ENCODE measurements at regions of chr19 and their contacts with region 1.

Region 1: DNA sequence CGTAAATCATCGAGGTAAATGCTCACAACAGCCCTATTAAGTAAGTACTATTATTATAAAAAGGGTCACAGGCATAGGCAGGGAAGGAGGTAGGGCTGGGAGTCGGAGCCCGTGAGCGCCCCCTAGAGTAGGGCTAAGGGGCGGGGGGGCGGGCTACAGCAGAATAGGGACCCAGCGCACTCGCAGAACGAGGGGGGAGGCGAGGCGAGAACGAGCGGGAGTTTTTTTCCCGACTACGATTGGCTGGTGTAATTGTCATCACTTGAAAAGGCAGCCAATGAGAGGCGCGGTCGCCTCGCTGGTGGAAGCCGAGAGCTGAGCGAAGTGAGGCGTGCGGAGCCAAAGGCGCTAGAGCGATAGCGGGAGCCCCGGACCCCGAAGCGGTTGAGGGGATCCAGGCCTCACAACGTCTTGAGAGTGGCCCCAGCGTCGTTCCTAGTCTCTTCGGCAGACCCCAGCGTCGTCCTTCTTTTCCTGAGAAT is 24.2 kb downstream of the KEAP1 start:
- DNase-seq: peak; percentile 86 to 89
- H3K4me3 ChIP-seq: peak overlapping the region; percentile 57
- H3K27ac ChIP-seq: no peak overlapping the region
- H3K4me1 ChIP-seq: peaks cover 14% of the 10 kb centered on the region
- H3K27me3 ChIP-seq: no peaks in the 10 kb centered on the region
- CTCF ChIP-seq: peak; percentile 67

Region 2: GRCh38 chr19:10259162-10259905 is 219.6 kb before region 1 on chr19:
- CTCF ChIA-PET with region 1: interaction called, 3 read pairs
- POLR2A ChIA-PET with region 1: interaction called, 3 read pairs
- intact Hi-C with region 1: loop called (anchors 5 kb)
- DNase-seq: peak; percentile 83 to 86
- H3K4me3 ChIP-seq: no peak overlapping the region
- H3K27ac ChIP-seq: 0 out of 2 replicates have a peak overlapping the region, but pooled peaks have one; percentile 5
- H3K4me1 ChIP-seq: peaks cover 18% of the 10 kb centered on the region
- H3K27me3 ChIP-seq: no peaks in the 10 kb centered on the region
- CTCF ChIP-seq: peak; percentile 89

Region 3: GRCh38 chr19:10403137-10404021 is 75.6 kb before region 1 on chr19 and contains the start of gene CDC37:
- CTCF ChIA-PET with region 1: interaction called, 7 read pairs
- POLR2A ChIA-PET with region 1: no interaction called
- intact Hi-C with region 1: loop called (anchors 10 kb)
- DNase-seq: peak; percentile 90 to 96
- H3K4me3 ChIP-seq: peak within 1 kb of the TSS; percentile 89
- H3K27ac ChIP-seq: peak within 1 kb of the TSS; percentile 39
- H3K4me1 ChIP-seq: peaks cover 20% of the 10 kb centered on the region
- H3K27me3 ChIP-seq: peaks cover 21% of the 10 kb centered on the region; the same call in 1 of the 2 replicates
- CTCF ChIP-seq: no peak
- total RNA-seq, gene CDC37: 156 and 191 TPM in 2 replicates

Region 4: GRCh38 chr19:10602330-10603083 is 123.6 kb after region 1 on chr19:
- CTCF ChIA-PET with region 1: interaction called, 17 read pairs
- POLR2A ChIA-PET with region 1: no interaction called
- intact Hi-C with region 1: no loop called
- DNase-seq: peak; percentile 58 to 77
- H3K4me3 ChIP-seq: peak overlapping the region; percentile 93
- H3K27ac ChIP-seq: peak overlapping the region; percentile 90
- H3K4me1 ChIP-seq: peaks cover 31% of the 10 kb centered on the region
- H3K27me3 ChIP-seq: no peaks in the 10 kb centered on the region
- CTCF ChIP-seq: no peak

Region 5: DNA sequence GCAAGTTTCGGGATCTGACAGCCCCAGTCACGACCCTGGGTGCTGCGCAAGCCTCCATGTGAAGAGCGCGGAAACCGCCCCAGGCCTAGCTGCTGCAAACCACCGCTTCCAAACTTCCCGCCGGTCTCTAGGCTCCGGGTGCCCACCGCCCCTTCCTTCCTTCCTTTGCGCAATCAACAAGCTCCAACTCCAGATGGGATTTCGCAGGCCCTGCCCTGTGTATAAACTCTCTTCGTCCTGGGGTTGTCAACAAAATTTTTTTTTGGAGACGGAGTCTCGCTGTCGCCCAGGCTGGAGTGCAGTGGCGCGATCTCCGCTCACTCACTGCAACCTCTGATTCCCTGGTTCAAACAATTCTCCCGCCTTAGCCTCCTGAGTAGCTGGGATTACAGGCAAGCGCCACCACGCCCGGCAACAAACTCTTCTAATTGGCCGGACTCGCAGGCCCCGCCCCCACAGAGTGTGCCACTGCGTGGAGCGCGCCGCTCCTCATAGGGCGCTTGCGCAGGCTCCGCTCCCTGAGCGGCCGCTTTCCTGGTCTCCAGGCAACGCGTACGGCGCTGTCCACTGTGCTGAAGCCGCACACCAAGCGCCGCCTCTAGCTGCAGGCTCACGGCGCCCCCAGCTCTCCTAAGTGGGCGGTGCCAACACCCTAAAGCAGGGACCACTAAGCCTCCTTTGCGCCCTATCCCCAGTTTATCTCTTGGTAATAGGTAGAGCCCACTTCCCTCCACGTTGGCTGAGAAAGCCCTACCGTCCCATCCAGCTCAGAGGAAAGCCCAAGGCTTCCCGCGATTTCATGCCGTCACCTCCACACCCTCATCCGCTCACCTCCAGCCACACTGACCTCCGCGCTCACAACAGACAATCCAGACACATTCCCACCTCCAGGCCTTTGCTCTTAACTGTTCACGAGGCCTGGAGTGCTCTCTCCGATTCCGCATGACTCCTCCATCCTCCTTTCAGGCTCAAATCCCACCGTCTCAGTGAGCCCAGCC is 216.8 kb after region 1 on chr19:
- CTCF ChIA-PET with region 1: no interaction called
- POLR2A ChIA-PET with region 1: no interaction called
- intact Hi-C with region 1: loop called (anchors 5 kb)
- DNase-seq: peak; percentile 81 to 91
- H3K4me3 ChIP-seq: no peak overlapping the region
- H3K27ac ChIP-seq: no peak overlapping the region
- H3K4me1 ChIP-seq: peaks cover 8% of the 10 kb centered on the region; the same call in 1 of the 2 replicates
- H3K27me3 ChIP-seq: 0 out of 2 replicates have a peak, but pooled peaks cover 14% of the 10 kb centered on the region
- CTCF ChIP-seq: no peak

Region 6: GRCh38 chr19:11361037-11361770 is 882.3 kb after region 1 on chr19:
- CTCF ChIA-PET with region 1: interaction called, 14 read pairs
- POLR2A ChIA-PET with region 1: no interaction called
- intact Hi-C with region 1: no loop called
- DNase-seq: no peak
- H3K4me3 ChIP-seq: no peak overlapping the region
- H3K27ac ChIP-seq: no peak overlapping the region
- H3K4me1 ChIP-seq: peaks cover 15% of the 10 kb centered on the region
- H3K27me3 ChIP-seq: no peaks in the 10 kb centered on the region
- CTCF ChIP-seq: no peak

Measured in PC-9 (cell line).